ENCODE measurements at regions of chr21 and their contacts with region 1.

Region 1: GRCh38 chr21:31098576-31099005 is 60.3 kb upstream of the KRTAP19-8 start:
- DNase-seq: peak; percentile 29 to 82 (median 62)
- ATAC-seq: peak; percentile 58 to 93 (median 90)
- H3K4me3 ChIP-seq: no peak overlapping the region
- H3K27ac ChIP-seq: no peak overlapping the region
- H3K4me1 ChIP-seq: no peaks in the 10 kb centered on the region
- H3K27me3 ChIP-seq: no peaks in the 10 kb centered on the region
- CTCF ChIP-seq: peak; percentile 33 to 77 (median 62)

Region 2: DNA sequence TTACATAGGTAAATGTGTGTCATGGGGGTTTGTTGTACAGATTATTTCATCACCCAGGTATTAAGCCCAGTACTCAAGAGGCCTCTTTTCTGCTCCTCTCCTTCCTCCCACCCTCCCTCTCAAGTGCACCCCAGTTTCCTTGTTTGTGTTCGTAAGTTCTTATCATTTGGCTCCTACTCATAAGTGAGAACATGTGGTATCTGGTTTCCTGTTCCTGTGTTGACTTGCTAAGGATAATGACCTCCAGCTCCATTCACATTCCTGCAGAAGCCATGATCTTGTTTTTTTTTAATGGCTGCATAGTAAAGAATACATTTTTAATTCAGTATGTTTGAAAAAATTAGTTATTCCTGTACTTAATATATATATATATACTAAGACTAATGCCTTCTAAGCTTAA is 1039.7 kb before region 1 on chr21:
- intact Hi-C with region 1: no loop called
- DNase-seq: no peak
- ATAC-seq: no peak
- H3K4me3 ChIP-seq: no peak overlapping the region
- H3K27ac ChIP-seq: no peak overlapping the region
- H3K4me1 ChIP-seq: no peaks in the 10 kb centered on the region
- H3K27me3 ChIP-seq: no peaks in the 10 kb centered on the region
- CTCF ChIP-seq: no peak

Region 3: DNA sequence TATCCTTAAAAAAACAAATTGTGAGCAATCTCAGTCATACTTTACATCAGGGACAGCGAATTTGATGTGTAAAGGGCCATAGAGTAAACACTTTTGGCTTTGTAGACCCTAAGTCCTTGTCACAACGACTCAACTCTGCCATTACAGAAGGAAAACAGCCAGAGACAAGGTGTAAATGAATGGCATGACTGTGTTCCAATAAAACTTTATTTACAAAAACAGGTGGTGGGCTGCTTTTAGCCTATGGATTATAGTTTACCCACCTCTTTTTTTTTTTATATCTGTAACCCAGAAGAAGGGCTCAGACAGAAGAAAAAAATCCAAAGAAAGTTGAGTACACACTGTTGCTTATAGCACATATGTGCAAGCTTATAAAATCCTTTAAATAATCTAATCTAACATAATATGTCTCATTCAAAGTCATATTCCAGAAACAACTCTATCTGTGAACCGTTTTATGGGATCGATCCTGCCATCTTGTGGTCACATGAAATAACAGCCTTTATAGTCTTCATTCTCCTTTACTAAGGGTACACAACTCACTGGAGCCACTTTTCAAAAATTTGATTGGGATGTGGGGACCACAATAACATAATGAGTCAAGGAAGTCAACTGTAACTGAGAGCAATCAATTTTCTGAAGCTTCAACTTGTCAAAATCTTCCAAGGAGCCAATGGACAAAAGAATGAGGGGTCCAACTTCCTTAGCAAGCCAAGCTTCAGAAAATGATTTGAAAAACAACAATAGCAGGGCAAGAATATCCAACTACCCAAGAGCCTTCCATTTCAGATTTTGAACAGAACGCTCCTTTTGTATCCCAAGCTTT is 81.9 kb after region 1 on chr21:
- intact Hi-C with region 1: loop called in 2 of 3 experiments (anchors 5 kb)
- DNase-seq: no peak
- ATAC-seq: peak in 3 of 4 donors; percentile 68 to 69 (median 69)
- H3K4me3 ChIP-seq: no peak overlapping the region
- H3K27ac ChIP-seq: no peak overlapping the region
- H3K4me1 ChIP-seq: no peaks in the 10 kb centered on the region
- H3K27me3 ChIP-seq: peaks cover 0 to 4% (median 0%) of the 10 kb centered on the region in 4 donors
- CTCF ChIP-seq: peak; percentile 12 to 31 (median 20)